CD14-positive monocyte (primary cell): ENCODE measurements at regions of chr10 and their contacts with region 1.

Region 1: DNA sequence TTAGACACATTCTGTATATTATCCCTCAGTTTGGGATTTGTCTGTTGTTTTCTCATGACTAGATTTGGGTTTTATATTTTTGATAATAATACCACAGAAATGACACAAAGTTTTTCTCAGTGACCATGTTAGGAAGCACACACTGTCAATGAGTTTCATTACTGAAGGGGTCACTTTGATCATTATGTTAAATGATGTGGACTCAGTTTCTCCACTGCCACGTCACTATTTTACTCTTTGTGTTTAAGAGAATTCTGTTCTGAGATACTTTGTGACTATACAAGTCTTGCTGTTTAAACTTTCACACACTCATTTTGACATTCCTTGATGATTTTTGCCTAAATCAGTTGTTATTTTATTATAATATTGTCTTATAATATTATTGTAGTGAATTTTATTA is 400.9 kb upstream of the AKR1E2 start:
- DNase-seq: no peak
- H3K4me3 ChIP-seq: no peak overlapping the region
- H3K4me3 Mint-ChIP-seq: no peak overlapping the region
- H3K27ac ChIP-seq: no peak overlapping the region
- H3K27ac Mint-ChIP-seq: no peak overlapping the region
- H3K4me1 ChIP-seq: no peaks in the 10 kb centered on the region
- H3K4me1 Mint-ChIP-seq: no peaks in the 10 kb centered on the region
- H3K27me3 ChIP-seq: no peaks in the 10 kb centered on the region
- H3K27me3 Mint-ChIP-seq: peaks cover 0 to 4% (median 0%) of the 10 kb centered on the region in 3 donors
- CTCF ChIP-seq: no peak

Region 2: GRCh38 chr10:4407783-4408182 is 17.3 kb before region 1 on chr10:
- intact Hi-C with region 1: loop called in 1 of 2 experiments (anchors 2 kb)
- DNase-seq: peak; percentile 70 to 88 (median 77)
- H3K4me3 ChIP-seq: no peak overlapping the region
- H3K4me3 Mint-ChIP-seq: no peak overlapping the region
- H3K27ac ChIP-seq: no peak overlapping the region
- H3K27ac Mint-ChIP-seq: peak overlapping the region in 2 of 7 donors; percentile 7 to 30
- H3K4me1 ChIP-seq: peaks cover 7 to 12% of the 10 kb centered on the region in 2 donors
- H3K4me1 Mint-ChIP-seq: peaks cover 10% of the 10 kb centered on the region
- H3K27me3 ChIP-seq: no peaks in the 10 kb centered on the region
- H3K27me3 Mint-ChIP-seq: no peaks in the 10 kb centered on the region
- CTCF ChIP-seq: no peak